ENCODE measurements at regions of chrX and their contacts with region 1.

Region 1: DNA sequence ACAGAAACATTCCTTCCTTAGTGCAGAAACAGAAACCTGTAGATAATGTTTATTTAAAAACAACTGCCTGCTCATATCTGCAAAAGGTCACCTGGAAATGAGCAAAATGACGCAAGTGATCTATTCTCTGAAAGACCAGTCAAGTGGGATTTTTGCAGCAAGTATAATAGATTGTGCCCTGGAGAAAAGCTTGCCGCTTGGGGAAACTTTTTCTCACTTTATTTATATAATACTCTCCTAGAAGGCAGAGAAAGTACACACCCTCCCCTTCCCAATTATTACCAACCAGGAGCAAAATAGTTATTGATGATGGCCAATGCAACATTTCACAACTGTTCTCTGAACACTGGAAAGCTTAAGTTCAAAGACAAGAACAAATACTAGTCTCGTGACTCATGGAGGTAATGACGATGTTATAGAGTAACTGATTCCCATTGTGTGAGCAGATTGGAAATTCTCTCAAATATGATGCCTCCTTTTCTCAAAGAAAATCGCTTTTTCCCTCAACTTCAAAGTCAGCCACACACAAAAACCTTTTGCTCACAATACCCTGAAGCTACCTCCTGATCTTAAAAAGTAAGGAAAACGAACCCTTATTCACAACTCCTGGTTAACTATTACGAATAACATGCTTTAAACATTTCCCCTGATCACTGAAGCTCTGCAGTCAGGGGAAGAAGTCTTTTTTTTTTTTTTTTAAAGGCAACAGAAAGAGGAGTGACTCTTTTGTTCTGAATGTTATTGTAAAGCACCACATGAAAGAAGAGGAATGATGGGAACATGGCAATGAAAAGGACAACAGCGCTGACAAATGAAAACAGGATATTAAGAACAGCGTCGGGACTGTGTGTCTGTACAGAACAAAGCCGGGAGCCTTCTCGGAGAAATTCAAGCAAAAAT is 41.0 kb downstream of the MID1 start:
- DNase-seq: no peak
- ATAC-seq: peak; percentile 77

Region 2: GRCh38 chrX:9429781-9430180 is 1149.6 kb before region 1 on chrX:
- intact Hi-C with region 1: loop called (anchors 10 kb)
- DNase-seq: no peak
- ATAC-seq: no peak

Region 3: GRCh38 chrX:10549280-10549679 is 30.1 kb before region 1 on chrX:
- intact Hi-C with region 1: no loop called
- DNase-seq: no peak
- ATAC-seq: no peak

Measured in sciatic nerve (tissue), 2 donors.